Activated B cell treated with CpG ODN at 0.5 μM for 24 hours (primary cell): ENCODE measurements at regions of chr12 and their contacts with region 1.

Region 1: GRCh38 chr12:92170050-92170449 is 24.4 kb upstream of the BTG1 start:
- DNase-seq: no peak
- ATAC-seq: no peak
- H3K4me3 Mint-ChIP-seq: peak overlapping the region; percentile 6
- H3K27ac Mint-ChIP-seq: peak overlapping the region; percentile 74
- H3K4me1 Mint-ChIP-seq: peaks cover 72% of the 10 kb centered on the region
- H3K27me3 Mint-ChIP-seq: no peaks in the 10 kb centered on the region
- CTCF ChIP-seq: no peak

Region 2: DNA sequence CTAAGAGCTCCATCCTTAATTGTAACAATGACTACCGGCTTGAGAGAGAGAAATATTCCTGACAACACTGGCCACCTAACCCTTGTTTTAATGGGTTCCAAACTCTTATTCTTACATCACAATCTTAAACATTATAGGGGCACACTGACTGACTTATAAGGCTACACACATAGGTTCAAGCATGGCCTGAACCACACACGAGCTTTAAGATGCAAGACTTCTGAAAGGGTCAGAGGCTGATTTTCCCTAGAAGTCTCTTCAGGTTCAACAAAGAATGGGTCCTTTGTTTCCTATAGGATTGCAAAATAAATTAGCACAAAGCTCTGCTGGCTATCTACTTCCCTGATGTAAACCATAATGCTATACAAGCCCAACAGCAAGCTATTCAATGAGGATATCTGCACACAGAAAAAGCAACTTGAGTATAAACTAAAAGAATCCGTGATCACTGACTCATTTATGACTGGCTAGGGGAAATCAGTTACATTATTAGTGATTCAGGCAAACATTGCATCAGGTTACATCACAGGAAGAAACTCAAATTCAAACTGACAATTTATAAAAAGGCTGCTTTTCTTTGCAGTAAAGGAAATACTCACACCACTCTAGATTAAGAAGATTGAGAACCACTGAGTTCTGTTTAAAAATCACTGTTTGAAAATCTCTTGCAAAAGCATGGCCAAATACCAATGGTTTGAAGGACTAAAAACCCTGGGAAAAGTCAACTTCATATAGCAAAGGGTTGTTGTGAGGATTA is 32.9 kb before region 1 on chr12:
- CTCF ChIA-PET with region 1: interaction called, 4 read pairs
- POLR2A ChIA-PET with region 1: interaction called, 607 read pairs
- intact Hi-C with region 1: no loop called
- DNase-seq: no peak
- ATAC-seq: no peak
- H3K4me3 Mint-ChIP-seq: peak overlapping the region; percentile 98
- H3K27ac Mint-ChIP-seq: peak overlapping the region; percentile 69
- H3K4me1 Mint-ChIP-seq: peaks cover 78% of the 10 kb centered on the region
- H3K27me3 Mint-ChIP-seq: no peaks in the 10 kb centered on the region
- CTCF ChIP-seq: no peak

Region 3: DNA sequence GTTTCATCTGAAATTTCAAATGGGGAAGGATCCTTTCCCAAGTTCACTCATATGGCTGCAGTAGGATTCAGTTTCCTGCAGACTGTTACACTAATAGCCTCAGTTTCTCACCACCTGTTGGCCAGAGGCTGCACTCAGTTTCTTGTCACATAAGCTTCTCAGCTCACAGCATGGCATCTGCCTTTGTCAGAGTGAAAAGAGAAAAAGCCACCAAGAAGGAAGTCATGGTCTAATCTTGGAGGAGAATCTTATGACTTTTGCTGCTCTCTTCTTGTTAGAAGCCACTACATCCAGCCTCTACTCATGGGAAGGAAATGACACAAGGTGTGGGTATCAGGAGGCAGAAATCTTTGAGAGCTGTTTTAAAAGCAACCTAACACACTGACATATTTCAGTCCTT is 15.0 kb after region 1 on chr12:
- CTCF ChIA-PET with region 1: interaction called, 3 read pairs
- POLR2A ChIA-PET with region 1: interaction called, 46 read pairs
- intact Hi-C with region 1: loop called (anchors 1 kb)
- DNase-seq: no peak
- ATAC-seq: peak; percentile 54
- H3K4me3 Mint-ChIP-seq: peak overlapping the region; percentile 76
- H3K27ac Mint-ChIP-seq: peak overlapping the region; percentile 95
- H3K4me1 Mint-ChIP-seq: peaks cover 57% of the 10 kb centered on the region
- H3K27me3 Mint-ChIP-seq: no peaks in the 10 kb centered on the region
- CTCF ChIP-seq: no peak

Region 4: GRCh38 chr12:92208613-92209121 is 38.6 kb after region 1 on chr12:
- CTCF ChIA-PET with region 1: interaction called, 3 read pairs
- POLR2A ChIA-PET with region 1: interaction called, 23 read pairs
- intact Hi-C with region 1: loop called (anchors 1 kb)
- DNase-seq: no peak
- ATAC-seq: peak; percentile 84
- H3K4me3 Mint-ChIP-seq: peak overlapping the region; percentile 61
- H3K27ac Mint-ChIP-seq: peak overlapping the region; percentile 70
- H3K4me1 Mint-ChIP-seq: peaks cover 28% of the 10 kb centered on the region
- H3K27me3 Mint-ChIP-seq: no peaks in the 10 kb centered on the region
- CTCF ChIP-seq: no peak

Region 5: DNA sequence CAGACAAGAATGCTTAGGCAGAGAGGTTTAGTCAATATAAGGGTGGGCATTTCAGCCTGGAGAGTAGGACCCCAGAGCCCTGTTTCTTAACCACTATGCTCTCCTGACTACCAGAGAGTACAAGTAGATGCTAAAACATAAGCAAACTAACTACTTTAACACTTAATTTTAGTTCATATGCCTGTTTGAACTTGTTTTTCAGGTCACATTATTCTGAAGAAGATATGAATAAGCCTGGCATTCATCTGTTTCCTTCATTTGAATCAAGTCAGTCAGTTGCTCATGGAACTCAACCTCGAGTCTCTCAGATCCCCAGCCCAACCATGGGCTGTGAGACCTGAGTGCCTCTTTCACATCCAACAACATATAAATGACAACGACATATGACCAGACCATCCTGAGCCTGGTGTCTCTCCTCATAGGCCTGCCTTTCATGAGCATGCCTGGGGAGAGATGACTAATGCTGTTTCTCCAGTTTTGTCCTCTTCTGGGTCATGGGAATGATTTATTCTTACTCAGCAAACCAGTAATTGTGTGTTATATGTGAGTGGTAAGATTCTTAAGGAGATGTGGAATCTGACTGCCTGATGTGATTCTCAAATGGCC is 226.7 kb after region 1 on chr12:
- CTCF ChIA-PET with region 1: interaction called, 3 read pairs
- POLR2A ChIA-PET with region 1: interaction called, 24 read pairs
- intact Hi-C with region 1: loop called (anchors 1 kb)
- DNase-seq: no peak
- ATAC-seq: no peak
- H3K4me3 Mint-ChIP-seq: no peak overlapping the region
- H3K27ac Mint-ChIP-seq: peak overlapping the region; percentile 93
- H3K4me1 Mint-ChIP-seq: peaks cover 70% of the 10 kb centered on the region
- H3K27me3 Mint-ChIP-seq: no peaks in the 10 kb centered on the region
- CTCF ChIP-seq: no peak

Region 6: GRCh38 chr12:92466391-92467305 is 296.6 kb after region 1 on chr12:
- CTCF ChIA-PET with region 1: no interaction called
- POLR2A ChIA-PET with region 1: interaction called, 16 read pairs
- intact Hi-C with region 1: loop called (anchors 1 kb)
- DNase-seq: peak; percentile 51
- ATAC-seq: peak; percentile 74
- H3K4me3 Mint-ChIP-seq: peak overlapping the region; percentile 93
- H3K27ac Mint-ChIP-seq: peak overlapping the region; percentile 99
- H3K4me1 Mint-ChIP-seq: peaks cover 94% of the 10 kb centered on the region
- H3K27me3 Mint-ChIP-seq: no peaks in the 10 kb centered on the region
- CTCF ChIP-seq: no peak

Region 7: DNA sequence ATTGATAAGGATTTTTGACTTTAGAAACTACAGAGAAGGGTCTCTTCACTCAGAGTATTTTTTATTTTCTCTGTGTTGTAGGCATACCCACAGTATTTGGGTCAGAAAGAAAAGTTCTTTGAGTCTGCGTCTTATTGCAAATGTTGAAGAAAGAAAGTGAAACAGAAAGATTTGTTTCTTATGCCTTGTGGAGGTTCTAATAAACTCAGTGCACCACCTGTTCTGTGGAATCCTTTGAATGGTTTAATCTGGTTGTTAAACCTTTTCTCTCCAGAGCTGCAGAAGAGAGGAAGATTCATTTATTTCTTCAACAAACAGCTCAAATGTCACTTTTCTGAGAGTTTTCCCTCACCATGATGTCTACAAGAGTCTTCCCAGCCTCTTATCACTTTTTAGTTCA is 386.1 kb after region 1 on chr12:
- CTCF ChIA-PET with region 1: no interaction called
- POLR2A ChIA-PET with region 1: interaction called, 4 read pairs
- intact Hi-C with region 1: loop called (anchors 1 kb)
- DNase-seq: no peak
- ATAC-seq: peak; percentile 33
- H3K4me3 Mint-ChIP-seq: peak overlapping the region; percentile 69
- H3K27ac Mint-ChIP-seq: peak overlapping the region; percentile 90
- H3K4me1 Mint-ChIP-seq: peaks cover 64% of the 10 kb centered on the region
- H3K27me3 Mint-ChIP-seq: no peaks in the 10 kb centered on the region
- CTCF ChIP-seq: no peak